ENCODE measurements at regions of chr19 and their contacts with region 1.

Region 1: GRCh38 chr19:43820098-43820883 is 6.8 kb upstream of the ZNF283 start:
- DNase-seq: peak; percentile 26 to 86 (median 84)
- H3K4me3 ChIP-seq: peak overlapping the region; percentile 25 to 77 (median 55)
- H3K27ac ChIP-seq: no peak overlapping the region
- H3K4me1 ChIP-seq: peaks cover 0 to 14% (median 8%) of the 10 kb centered on the region in 4 experiments
- H3K27me3 ChIP-seq: peaks cover 0 to 23% (median 15%) of the 10 kb centered on the region in 5 experiments

Region 2: DNA sequence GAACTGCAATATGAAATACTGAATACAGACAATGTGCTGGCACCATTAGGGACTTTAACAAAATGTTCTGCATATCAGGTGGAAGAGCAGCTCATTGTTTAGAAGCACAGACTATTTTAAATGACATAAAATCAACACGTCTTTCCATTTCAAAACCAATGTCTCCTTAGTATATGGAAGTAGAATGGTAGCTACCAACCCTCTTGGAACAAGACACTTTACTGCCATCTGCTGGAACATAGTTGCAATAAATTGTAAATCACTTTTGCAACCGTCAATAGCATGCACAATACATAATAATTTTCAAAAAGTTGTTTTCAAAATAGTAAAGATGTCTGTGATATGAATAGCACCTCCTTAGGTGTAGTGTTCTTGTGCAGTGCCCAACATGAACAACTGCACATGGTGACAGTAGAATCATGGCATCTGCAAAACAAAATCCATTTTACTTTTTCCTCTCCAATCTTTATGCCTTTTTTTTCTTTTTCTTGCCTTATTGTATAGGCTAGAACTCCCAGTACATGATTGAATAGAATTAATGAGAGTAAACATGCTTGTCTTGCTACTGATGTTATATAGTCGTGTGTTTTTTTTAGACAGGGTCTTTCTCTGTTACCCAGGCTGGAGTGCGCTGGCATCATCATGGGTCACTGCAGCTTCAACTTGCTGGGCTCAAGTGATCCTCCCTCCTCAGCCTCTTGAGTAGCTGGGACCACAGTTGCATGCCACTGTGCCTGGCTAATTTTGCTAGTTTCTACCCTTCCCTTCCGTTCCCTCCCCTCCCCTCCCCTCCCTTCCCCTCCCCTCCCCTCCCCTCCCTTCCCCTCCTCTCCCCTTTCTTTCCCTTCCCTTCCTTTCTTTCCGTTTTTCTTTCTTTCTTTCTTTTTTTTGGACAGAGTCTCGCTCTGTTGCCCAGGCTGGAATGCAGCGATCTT is 10.3 kb before region 1 on chr19:
- CTCF ChIA-PET with region 1: interaction called, 11 read pairs
- POLR2A ChIA-PET with region 1: no interaction called
- DNase-seq: peak; percentile 72 to 88 (median 86)
- H3K4me3 ChIP-seq: no peak overlapping the region
- H3K27ac ChIP-seq: no peak overlapping the region
- H3K4me1 ChIP-seq: no peaks in the 10 kb centered on the region
- H3K27me3 ChIP-seq: peaks cover 0 to 2% (median 0%) of the 10 kb centered on the region in 5 experiments

Region 3: GRCh38 chr19:43883864-43884263 is 63.6 kb after region 1 on chr19:
- CTCF ChIA-PET with region 1: no interaction called
- POLR2A ChIA-PET with region 1: no interaction called
- DNase-seq: no peak
- H3K4me3 ChIP-seq: no peak within 1 kb of the TSS
- H3K27ac ChIP-seq: no peak within 1 kb of the TSS
- H3K4me1 ChIP-seq: no peaks in the 10 kb centered on the region
- H3K27me3 ChIP-seq: no peaks in the 10 kb centered on the region

Measured in common myeloid progenitor, CD34-positive (primary cell).